ENCODE measurements at regions of chr1 and their contacts with region 1.

Region 1: GRCh38 chr1:27525296-27526272 is 35.6 kb upstream of the WASF2 start:
- DNase-seq: peak in 1 of 10 donors; percentile 49
- H3K4me3 ChIP-seq: peak overlapping the region in 57 of 59 donors; percentile 4 to 72 (median 39)
- H3K27ac ChIP-seq: peak overlapping the region in 58 of 59 donors; percentile 33 to 97 (median 88)
- H3K27me3 ChIP-seq: no peaks in the 10 kb centered on the region
- CTCF ChIP-seq: no peak

Region 2: GRCh38 chr1:27428316-27429028 is 97.1 kb before region 1 on chr1:
- intact Hi-C with region 1: loop called in 1 of 2 experiments (anchors 10 kb)
- DNase-seq: peak in 5 of 10 donors; percentile 37 to 54 (median 46)
- H3K4me3 ChIP-seq: peak overlapping the region in 49 of 59 donors; percentile 2 to 48 (median 25)
- H3K27ac ChIP-seq: peak overlapping the region; percentile 54 to 97 (median 90)
- H3K27me3 ChIP-seq: no peaks in the 10 kb centered on the region
- CTCF ChIP-seq: peak in 1 of 56 donors; percentile 3

Region 3: DNA sequence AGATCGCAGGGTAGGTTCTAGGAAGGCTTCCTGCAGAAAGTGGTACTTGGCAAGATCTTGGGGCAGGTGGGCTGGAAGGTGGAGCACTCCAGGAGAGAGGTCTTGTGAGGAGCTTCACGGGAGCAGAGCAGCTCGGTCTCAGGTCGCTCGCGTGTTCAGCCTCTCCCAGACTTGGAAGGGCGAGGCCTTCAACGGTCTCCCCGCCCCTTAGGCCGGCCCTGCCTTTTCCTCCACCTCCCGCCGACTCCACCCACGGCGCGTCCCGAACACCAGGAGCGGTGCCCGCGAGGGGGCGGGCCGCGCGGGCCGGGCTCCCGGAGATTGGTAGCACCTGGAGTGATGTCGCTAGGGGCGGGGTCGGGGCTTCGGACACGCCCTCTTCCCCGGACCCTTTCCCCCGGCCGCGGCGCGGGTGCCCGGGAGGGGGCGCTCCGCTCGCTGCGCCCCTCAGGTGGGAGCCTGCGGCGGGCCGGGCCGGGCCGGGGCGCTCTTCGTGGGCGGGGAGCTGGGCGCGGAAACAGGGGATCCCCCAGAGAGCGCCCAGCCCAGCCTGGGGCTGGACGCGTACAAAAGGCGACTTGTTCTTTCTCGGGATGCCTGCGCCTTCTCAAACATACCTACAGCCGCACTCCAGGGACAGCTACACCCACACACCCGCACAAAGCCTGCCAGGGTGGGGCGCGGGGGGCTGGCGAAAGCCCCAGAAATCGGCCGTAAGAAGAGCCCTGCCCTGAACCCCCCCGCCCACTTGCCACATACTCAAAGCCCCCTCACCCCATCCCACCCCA is 42.9 kb after region 1 on chr1:
- intact Hi-C with region 1: loop called in 1 of 2 experiments (anchors 5 kb)
- DNase-seq: peak in 9 of 10 donors; percentile 54 to 85 (median 76)
- H3K4me3 ChIP-seq: peak overlapping the region in 54 of 59 donors; percentile 5 to 55 (median 36)
- H3K27ac ChIP-seq: peak overlapping the region in 54 of 59 donors; percentile 2 to 95 (median 76)
- H3K27me3 ChIP-seq: no peaks in the 10 kb centered on the region
- CTCF ChIP-seq: peak in 49 of 56 donors; percentile 20 to 68 (median 48)